Endothelial cell of umbilical vein (primary cell): ENCODE measurements at regions of chr3 and their contacts with region 1.

Region 1: DNA sequence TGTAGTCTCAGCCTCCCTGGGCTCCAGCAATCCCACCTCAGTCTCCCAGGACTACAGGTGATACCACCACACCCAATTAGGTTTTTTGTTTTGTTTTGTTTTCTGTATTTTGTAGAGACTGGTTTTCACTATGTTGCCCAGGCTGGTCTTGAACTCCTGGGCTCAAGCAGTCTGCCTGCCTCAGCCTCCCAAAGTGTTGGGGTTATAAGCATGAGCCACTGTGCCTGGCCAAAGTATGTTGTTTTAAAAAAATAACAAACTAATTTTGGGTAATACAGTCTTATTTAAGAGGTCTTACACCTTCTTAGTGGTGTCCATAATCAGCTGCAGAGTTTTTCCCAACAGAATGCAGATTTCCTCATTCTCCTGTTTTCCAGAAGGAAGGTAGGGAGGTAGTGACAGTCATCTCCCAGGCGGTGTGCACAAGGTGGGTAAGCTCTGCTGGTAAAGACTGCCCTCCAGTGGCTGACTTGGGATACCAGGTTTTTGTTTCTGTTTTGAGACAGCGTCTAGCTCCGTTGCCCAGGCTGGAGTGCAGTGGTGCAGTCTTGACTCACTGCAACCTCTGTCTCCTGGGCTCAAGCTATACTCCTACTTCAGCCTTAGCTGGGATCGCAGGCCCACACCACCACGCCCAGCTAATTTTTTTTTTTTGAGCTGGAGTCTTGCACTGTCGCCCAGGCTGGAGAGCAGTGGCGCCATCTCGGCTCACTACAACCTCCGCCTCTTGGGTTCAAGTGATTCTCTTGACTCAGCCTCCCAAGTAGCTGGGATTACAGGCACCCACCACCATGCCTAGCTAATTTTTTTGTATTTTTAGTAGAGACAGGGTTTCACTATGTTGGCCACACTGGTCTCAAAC is 58.4 kb downstream of the MAP6D1 start:
- DNase-seq: peak; percentile 74
- H3K4me3 ChIP-seq: no peak overlapping the region
- H3K27ac ChIP-seq: no peak overlapping the region
- H3K4me1 ChIP-seq: peaks cover 22% of the 10 kb centered on the region
- H3K27me3 ChIP-seq: no peaks in the 10 kb centered on the region
- CTCF ChIP-seq: peak; percentile 69 to 80
- POLR2A ChIP-seq: no peak

Region 2: DNA sequence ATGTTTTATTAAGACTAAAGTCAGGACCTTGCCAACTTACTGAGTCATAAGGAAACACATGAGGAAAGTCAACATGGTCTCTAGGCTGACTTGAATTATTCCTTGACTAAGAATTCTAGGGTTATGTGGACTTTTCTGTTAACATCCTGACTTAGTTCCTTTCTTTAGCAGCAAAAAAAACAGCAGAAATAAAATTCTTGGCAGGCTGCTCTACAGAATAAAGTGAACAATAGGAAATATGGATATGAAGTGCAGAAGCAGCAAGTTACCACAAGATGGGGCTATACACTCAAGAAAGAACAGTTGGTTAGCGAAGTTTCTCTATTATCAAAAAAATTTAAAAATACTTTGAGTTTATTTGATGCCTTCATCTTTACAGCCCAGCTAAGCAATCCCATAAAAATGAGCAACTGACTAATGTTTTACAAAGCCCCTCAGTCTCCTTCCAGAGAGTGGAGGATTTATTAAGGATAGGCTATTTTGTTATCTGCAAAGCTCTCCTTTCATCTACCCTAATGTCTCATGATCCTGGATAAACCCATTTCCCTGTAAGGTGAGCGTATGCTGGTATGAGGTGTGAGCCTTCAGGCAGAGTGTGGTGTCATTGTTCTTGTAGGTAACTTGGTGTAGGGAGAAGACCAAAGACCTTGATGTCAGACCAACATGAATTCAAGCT is 644.6 kb before region 1 on chr3:
- CTCF ChIA-PET with region 1: interaction called, 3 read pairs
- POLR2A ChIA-PET with region 1: no interaction called
- dilution Hi-C with region 1: no loop called
- intact Hi-C with region 1: loop called (anchors 1 kb)
- DNase-seq: peak; percentile 95
- H3K4me3 ChIP-seq: no peak overlapping the region
- H3K27ac ChIP-seq: peak overlapping the region; percentile 58
- H3K4me1 ChIP-seq: peaks cover 27% of the 10 kb centered on the region
- H3K27me3 ChIP-seq: peaks cover 3 to 4% of the 10 kb centered on the region in 2 experiments
- CTCF ChIP-seq: peak; percentile 56 to 66
- POLR2A ChIP-seq: no peak

Region 3: DNA sequence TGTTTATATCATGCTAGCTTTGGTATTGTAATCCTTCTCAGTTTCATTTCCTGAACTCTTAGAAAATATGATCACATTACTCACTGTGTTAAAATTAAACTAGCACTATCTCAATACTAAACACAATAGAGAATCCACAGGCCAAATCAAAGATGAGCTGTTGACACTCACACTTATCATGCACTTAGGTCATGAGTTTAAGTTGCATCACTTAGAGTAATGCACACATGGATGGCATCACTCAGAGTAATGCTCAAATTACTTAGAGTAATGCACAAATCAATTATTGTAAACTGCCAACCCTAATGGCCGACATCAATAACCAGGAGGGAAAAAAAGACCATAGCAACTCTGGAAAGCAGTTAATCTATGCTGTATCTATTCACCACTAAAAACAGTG is 298.6 kb before region 1 on chr3:
- CTCF ChIA-PET with region 1: interaction called, 84 read pairs
- POLR2A ChIA-PET with region 1: no interaction called
- dilution Hi-C with region 1: no loop called
- intact Hi-C with region 1: loop called (anchors 1 kb)
- DNase-seq: no peak
- H3K4me3 ChIP-seq: no peak overlapping the region
- H3K27ac ChIP-seq: no peak overlapping the region
- H3K4me1 ChIP-seq: peaks cover 6% of the 10 kb centered on the region
- H3K27me3 ChIP-seq: no peaks in the 10 kb centered on the region
- CTCF ChIP-seq: no peak
- POLR2A ChIP-seq: no peak

Region 4: DNA sequence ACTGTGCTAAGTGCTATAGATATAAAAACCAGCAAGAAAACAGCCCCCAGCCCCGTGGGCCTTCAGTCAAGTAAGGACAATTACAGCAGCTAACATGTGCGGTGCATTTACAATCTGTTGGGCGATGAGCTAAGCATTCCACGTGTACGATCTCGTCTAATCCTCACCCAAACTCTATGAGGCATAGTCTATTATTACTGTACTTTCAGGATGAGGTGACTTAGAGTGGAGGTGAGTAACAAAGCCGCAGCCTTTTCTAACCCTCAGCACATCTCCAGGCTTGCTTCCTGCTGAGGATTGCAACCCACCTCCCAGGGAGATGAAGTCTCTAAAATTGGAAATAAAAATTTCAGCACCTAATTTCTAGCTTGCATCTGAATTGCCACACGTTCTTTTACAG is 285.4 kb before region 1 on chr3:
- CTCF ChIA-PET with region 1: interaction called, 22 read pairs
- POLR2A ChIA-PET with region 1: no interaction called
- dilution Hi-C with region 1: no loop called
- intact Hi-C with region 1: no loop called
- DNase-seq: no peak
- H3K4me3 ChIP-seq: no peak overlapping the region
- H3K27ac ChIP-seq: no peak overlapping the region
- H3K4me1 ChIP-seq: no peaks in the 10 kb centered on the region
- H3K27me3 ChIP-seq: no peaks in the 10 kb centered on the region
- CTCF ChIP-seq: no peak
- POLR2A ChIP-seq: no peak

Region 5: DNA sequence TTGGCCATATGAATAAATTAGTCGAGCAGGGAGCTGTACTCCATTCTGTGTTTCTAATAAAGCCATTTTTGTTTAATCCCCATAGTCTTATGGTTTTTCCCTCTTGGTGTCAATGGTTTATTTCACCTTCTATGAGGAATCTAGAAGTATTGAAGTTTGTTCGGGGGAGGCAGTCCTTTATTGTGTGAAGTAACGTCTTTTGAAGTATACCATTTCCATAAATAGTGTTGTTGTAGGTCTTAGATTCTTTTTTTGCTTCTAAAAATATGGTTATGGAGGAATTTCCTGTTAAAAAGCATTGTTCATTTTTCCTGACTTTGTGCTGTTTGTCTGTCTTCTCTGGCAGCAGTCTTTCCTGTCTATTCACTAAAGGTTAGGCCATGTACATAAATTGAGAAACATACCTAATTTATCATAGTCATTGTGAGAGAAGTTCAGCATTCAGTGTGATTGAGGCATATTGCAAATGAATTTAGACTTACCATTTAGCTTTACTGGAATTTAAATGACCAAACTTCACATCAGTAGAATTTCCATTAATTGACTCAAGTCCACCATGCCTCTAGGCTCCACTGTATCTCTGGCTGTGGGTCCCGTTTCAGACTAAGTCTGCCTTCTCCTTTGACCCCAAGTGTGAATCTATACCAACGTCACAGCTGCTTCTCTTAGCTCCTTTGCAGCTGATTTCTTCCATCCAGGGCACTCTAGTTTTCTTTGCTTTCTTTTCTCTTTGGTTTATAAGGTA is 32.1 kb before region 1 on chr3:
- CTCF ChIA-PET with region 1: interaction called, 10 read pairs
- POLR2A ChIA-PET with region 1: no interaction called
- dilution Hi-C with region 1: no loop called
- intact Hi-C with region 1: no loop called
- DNase-seq: peak; percentile 90
- H3K4me3 ChIP-seq: peak overlapping the region in 1 of 3 experiments; percentile 21
- H3K27ac ChIP-seq: peak overlapping the region; percentile 74
- H3K4me1 ChIP-seq: peaks cover 28% of the 10 kb centered on the region
- H3K27me3 ChIP-seq: no peaks in the 10 kb centered on the region
- CTCF ChIP-seq: no peak
- POLR2A ChIP-seq: no peak